ENCODE measurements at regions of chr3 and their contacts with region 1.

Region 1: DNA sequence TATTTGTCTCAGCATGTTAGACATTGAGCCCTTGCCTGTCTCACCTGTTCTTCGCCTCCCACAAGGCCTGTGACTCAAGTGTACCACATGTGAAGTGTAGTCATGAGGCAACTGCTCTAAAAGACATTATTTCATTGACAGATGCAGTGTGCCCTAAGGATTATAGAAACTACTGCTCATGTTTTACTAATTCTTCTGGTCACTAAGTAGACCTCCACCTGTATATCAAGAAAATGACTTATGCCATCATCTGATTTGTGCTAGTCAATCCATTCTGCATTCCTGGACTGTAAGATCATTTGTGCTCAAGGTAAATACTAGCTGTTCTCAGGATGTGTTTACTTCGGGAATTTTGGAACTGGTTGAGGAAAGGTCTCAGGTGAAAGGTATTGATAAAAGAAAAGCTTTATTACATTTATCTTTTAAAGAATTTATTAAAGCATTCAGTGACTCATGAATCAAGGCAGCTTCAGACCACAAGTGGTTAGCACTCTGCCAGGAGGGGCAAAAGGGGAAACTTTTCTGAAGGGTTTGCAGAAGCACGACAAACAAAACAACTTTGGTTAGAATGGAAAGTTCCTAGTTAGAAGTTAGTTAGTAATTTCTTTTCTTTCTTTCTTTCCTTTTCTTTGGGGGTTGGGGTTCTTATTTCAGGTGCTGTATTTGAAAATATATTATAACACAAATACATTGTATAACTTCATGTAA is 465.3 kb upstream of the CBLB start:
- DNase-seq: peak; percentile 80
- H3K4me3 Mint-ChIP-seq: peak overlapping the region; percentile 68
- H3K27ac Mint-ChIP-seq: peak overlapping the region; percentile 95
- H3K4me1 Mint-ChIP-seq: peaks cover 71% of the 10 kb centered on the region
- H3K27me3 Mint-ChIP-seq: no peaks in the 10 kb centered on the region

Region 2: DNA sequence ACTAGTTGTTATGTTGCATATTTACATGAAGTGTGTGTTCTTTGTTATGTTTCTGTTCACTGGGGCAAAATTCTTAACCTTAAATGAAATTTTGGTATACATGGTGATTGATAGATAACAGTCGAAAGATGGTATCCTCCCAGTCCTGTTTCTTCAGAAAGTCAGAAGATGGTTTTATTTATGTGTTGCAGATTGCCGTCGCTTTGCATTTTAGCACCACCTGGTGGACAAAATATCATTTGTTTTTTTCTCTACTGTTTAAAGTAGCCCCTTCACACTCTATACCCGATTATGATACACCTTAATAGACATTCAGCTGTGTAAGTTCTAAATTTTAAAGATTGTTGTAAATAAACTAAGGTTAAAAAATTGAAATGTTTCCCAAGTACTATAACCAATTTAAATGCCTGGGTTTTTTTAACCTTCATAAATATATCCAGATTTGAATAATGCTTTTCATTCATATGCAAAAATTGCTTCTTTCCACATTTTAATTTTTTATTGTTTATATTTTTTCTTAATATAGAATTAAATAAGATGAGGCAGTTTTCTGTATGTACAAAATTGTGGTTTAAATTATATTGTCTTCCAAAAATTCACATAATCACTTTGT is 815.2 kb before region 1 on chr3:
- CTCF ChIA-PET with region 1: no interaction called
- intact Hi-C with region 1: loop called (anchors 5 kb)
- DNase-seq: peak; percentile 30
- H3K4me3 Mint-ChIP-seq: no peak overlapping the region
- H3K27ac Mint-ChIP-seq: no peak overlapping the region
- H3K4me1 Mint-ChIP-seq: no peaks in the 10 kb centered on the region
- H3K27me3 Mint-ChIP-seq: no peaks in the 10 kb centered on the region

Region 3: GRCh38 chr3:105827959-105828358 is 506.1 kb before region 1 on chr3:
- CTCF ChIA-PET with region 1: interaction called, 3 read pairs
- intact Hi-C with region 1: loop called (anchors 1 kb)
- DNase-seq: peak; percentile 26
- H3K4me3 Mint-ChIP-seq: peak overlapping the region; percentile 41
- H3K27ac Mint-ChIP-seq: peak overlapping the region; percentile 99
- H3K4me1 Mint-ChIP-seq: peaks cover 84% of the 10 kb centered on the region
- H3K27me3 Mint-ChIP-seq: no peaks in the 10 kb centered on the region

Region 4: DNA sequence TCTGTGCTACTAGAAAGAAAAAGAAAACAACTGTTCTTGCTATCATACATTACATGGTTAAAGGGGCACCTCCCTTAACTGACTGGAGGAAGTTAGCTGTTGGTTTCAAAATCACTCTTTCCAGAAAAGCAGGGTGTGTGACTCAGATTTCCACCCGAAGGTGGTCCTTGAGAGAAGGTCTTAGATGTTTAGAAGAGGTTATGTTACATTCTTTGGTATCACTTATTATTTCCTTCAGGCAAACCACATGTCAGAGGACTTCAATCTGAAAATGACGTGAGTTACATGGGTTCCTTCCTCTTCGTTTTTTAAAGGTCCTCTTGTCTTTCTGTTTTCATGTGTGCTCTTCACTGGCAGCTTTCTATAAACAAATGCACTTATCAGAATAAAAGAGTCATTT is 157.3 kb before region 1 on chr3:
- CTCF ChIA-PET with region 1: no interaction called
- intact Hi-C with region 1: loop called (anchors 1 kb)
- DNase-seq: peak; percentile 79
- H3K4me3 Mint-ChIP-seq: peak overlapping the region; percentile 38
- H3K27ac Mint-ChIP-seq: peak overlapping the region; percentile 93
- H3K4me1 Mint-ChIP-seq: peaks cover 59% of the 10 kb centered on the region
- H3K27me3 Mint-ChIP-seq: no peaks in the 10 kb centered on the region

Region 5: DNA sequence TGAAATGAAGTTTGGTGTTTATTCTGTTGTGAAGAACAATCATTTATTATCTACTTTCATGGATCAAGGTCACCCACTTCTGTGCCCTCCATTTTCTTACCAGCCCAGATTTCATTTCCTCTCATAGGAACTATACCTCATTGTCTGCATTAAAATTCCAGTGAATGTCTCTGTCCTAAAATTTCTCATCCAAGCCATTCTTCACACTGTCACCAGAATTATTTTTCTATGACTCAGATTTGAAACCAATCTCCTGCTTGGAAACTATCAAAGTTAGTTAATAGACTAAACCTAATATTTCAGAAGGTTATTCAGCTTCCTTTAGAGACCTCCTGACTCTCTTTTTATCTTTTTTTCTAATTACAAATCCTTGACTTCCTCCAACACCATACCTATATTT is 101.1 kb before region 1 on chr3:
- CTCF ChIA-PET with region 1: interaction called, 3 read pairs
- intact Hi-C with region 1: loop called (anchors 1 kb)
- DNase-seq: no peak
- H3K4me3 Mint-ChIP-seq: no peak overlapping the region
- H3K27ac Mint-ChIP-seq: peak overlapping the region; percentile 86
- H3K4me1 Mint-ChIP-seq: peaks cover 56% of the 10 kb centered on the region
- H3K27me3 Mint-ChIP-seq: no peaks in the 10 kb centered on the region

Region 6: DNA sequence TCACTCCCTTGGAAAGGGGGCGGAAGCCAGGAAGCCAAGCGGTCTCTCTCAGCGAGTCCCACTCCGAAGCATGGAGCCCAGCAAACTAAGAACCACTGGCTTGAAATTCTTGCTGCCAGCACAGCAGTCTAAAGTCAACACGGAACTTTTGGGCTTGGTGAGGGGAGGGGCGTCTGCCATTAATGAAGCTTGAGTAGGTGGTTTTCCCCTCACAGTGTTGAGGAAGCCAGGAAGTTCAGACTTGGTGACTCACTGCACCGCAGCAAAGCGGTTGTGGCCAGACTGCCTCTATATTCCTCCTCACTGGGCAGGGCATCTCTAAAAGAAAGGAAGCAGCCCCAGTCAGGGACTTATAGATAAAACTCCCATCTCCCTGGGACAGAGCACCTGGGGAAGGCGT is 200.1 kb after region 1 on chr3:
- CTCF ChIA-PET with region 1: no interaction called
- intact Hi-C with region 1: loop called (anchors 5 kb)
- DNase-seq: peak; percentile 69
- H3K4me3 Mint-ChIP-seq: no peak overlapping the region
- H3K27ac Mint-ChIP-seq: no peak overlapping the region
- H3K4me1 Mint-ChIP-seq: peaks cover 15% of the 10 kb centered on the region
- H3K27me3 Mint-ChIP-seq: peaks cover 7% of the 10 kb centered on the region

Region 7: GRCh38 chr3:107346564-107346963 is 1012.5 kb after region 1 on chr3:
- CTCF ChIA-PET with region 1: no interaction called
- intact Hi-C with region 1: no loop called
- DNase-seq: no peak
- H3K4me3 Mint-ChIP-seq: no peak overlapping the region
- H3K27ac Mint-ChIP-seq: no peak overlapping the region
- H3K4me1 Mint-ChIP-seq: peaks cover 1% of the 10 kb centered on the region
- H3K27me3 Mint-ChIP-seq: no peaks in the 10 kb centered on the region